MCF 10A (cell line): ENCODE measurements at regions of chr1 and their contacts with region 1.

Region 1: DNA sequence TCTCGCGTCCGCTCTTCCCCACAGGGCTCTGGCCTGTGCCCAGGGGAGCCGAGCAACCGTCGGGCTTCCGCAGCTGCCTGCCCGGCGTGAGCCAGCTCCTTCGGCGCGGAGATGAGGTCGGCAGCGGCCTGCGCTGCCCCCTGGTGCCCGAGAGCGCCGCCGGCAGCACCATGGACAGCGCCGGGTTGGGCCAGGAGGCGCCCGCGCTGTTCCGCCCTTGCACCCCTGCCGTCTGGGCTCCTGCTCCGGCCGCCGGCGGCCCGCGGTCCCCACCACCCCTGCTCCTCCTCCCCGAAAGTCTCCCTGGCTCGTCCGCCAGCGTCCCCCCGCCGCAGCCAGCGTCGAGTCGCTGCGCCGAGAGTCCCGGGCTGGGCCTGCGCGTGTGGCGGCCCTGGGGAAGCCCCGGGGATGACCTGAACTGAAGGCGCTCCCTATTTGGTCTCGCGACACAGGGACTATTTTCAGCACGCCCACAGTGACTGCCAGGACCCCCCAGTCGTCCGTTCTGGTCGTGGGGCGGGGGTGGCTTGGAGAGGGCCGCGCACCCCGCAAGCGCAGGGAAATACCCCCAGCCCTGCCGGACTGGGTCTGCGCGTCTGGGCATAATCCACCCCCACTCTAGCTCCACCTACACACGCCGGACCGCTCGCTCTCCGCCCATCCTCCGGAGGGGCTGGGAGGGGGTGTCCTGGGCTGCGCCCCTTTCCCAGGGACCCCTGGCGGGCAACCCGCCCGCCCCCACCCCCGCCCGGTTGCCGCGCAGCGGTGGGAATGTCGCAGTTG is 1.3 kb downstream of the HES3 start:
- DNase-seq: peak; percentile 75
- H3K4me3 Mint-ChIP-seq: peak overlapping the region; percentile 10
- H3K27ac Mint-ChIP-seq: no peak overlapping the region
- H3K4me1 Mint-ChIP-seq: peaks cover 5% of the 10 kb centered on the region
- H3K27me3 Mint-ChIP-seq: peaks cover 30% of the 10 kb centered on the region
- CTCF ChIP-seq: peak; percentile 91

Region 2: DNA sequence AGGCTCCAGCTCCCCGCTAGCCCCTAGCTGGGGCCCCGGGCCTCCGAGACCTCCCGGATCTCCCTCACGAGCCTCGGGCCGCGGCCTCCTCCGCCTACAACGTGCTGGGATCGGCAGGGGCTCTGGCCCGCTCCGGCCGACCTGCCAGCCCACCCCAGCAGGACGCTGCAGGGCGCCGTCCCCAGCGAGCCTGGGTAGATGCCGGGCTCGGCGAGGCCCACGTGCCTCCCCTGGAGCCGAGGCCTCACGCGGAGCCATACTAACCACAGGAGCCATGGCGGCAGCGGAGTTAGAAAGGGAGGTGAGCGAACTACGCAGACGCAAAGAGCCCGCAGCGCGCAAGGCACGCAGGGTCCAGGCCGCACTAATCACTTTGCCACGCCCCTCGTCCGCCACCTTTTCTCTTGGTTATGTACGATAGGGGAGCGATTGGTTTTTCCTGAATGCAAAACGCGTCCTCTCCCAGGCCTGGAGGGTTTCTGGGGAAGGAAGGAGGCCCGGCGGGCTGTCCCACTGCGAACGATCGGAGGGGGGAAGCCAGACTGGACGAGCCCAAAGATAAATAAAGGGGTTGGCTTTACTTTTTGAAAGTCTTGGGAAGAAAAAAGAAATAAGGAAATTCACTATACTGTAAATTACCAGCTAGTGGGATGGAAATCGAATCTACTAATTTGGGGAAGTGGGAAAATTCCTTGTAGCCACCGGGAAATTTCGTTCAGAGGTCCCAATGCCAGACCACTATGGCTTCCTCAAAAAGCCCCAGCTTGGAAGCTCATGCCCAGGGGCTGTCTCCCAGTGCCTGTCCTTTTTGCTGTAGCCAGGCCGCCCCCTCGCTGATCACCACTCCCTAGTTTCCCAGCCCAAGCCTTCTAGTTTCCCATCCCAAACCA is 45.7 kb before region 1 on chr1 and contains the start of gene RPL22:
- CTCF ChIA-PET with region 1: interaction called, 11 read pairs
- POLR2A ChIA-PET with region 1: no interaction called
- intact Hi-C with region 1: no loop called
- DNase-seq: peak; percentile 100
- H3K4me3 Mint-ChIP-seq: peak within 1 kb of the TSS; percentile 87
- H3K27ac Mint-ChIP-seq: peak within 1 kb of the TSS; percentile 97
- H3K4me1 Mint-ChIP-seq: peaks cover 25% of the 10 kb centered on the region
- H3K27me3 Mint-ChIP-seq: no peaks in the 10 kb centered on the region
- CTCF ChIP-seq: no peak
- total RNA-seq, gene RPL22: 477 and 513 TPM in 2 replicates

Region 3: DNA sequence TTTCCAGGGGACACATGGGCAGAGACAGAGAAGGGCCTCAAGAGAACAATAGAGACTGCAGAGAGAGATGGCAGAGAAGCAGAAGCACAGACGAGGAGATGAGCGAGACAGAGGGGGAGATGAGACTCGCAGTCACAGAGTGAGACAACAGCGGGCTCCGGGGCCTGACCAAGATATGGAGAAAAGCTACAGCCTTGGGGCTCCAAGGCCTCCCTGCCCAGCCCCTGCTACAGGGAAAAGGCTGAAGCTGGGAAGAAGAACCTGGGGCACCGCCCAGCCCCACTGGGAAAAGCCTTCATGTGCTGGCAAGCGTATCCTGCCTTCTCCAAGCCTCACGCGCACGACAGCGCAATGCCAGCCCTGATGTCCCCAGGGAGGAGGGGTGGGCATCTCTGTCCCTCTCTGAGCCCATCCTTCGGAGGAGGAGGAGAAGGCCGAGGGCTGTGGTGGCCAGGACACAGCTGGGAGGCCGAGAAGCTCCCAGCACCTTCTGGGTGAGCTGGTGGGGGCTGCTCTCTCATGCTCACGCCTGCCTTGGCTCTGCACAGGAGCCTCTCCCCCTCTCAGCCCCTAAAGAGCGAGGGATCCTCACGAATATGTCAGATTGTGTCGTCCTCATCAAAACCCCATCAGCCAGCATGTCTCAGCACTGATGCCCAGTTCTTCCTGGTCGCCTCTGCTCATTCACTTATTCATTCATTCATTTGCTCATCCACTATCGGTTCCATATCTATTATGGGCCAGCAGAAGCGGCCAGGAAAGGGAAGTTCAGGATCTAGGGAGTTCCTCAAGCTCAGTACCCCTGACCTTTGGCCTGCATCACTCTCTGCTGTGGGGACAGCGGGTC is 91.7 kb after region 1 on chr1:
- CTCF ChIA-PET with region 1: interaction called, 88 read pairs
- POLR2A ChIA-PET with region 1: interaction called, 3 read pairs
- intact Hi-C with region 1: no loop called
- DNase-seq: no peak
- H3K4me3 Mint-ChIP-seq: no peak overlapping the region
- H3K27ac Mint-ChIP-seq: no peak overlapping the region
- H3K4me1 Mint-ChIP-seq: no peaks in the 10 kb centered on the region
- H3K27me3 Mint-ChIP-seq: no peaks in the 10 kb centered on the region
- CTCF ChIP-seq: no peak

Region 4: DNA sequence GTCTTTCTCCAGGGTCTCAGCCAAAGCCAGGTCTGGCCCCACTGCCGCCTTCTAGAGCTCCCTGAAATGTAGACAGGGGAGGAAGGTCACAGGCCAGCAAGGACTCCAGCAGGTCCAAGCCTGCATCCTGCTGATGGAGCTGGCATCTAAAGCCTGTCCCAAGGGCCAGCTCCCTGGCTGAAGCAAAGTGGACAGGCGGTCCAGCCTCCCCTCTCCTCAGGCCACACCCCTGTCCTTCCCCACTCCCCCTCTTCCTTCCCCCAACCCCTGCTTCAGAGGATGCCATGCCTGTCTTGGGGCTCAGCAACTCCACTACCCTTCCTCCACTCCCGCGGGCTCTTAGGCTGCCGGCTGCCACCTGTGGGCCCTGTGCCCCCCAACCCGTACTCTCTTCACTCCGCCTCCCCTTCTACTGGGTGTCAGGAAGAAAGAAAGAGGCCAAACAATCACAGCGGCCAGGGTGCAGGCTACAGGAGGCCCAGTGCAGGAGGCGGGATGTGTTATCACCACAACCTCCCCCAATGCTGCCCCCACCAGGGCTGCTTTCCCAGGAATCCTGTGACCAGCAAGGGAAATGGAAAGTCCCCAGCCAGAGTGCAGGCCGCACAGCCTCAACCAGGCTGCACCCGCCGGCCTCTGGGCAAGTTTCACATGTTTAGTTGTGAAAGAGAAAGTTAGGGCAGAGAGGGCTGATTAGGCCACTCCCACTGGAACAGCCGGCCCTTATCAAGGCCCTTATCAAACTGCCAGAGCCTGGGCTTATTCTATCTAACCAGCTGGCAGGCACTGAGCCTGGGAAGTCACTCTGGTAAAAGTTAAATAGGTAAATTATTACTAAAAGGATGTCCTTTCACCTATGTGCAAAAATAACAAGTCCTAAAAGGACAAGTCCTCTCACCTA is 114.2 kb after region 1 on chr1:
- CTCF ChIA-PET with region 1: interaction called, 16 read pairs
- POLR2A ChIA-PET with region 1: no interaction called
- intact Hi-C with region 1: no loop called
- DNase-seq: peak; percentile 39
- H3K4me3 Mint-ChIP-seq: no peak overlapping the region
- H3K27ac Mint-ChIP-seq: no peak overlapping the region
- H3K4me1 Mint-ChIP-seq: peaks cover 18% of the 10 kb centered on the region
- H3K27me3 Mint-ChIP-seq: no peaks in the 10 kb centered on the region
- CTCF ChIP-seq: no peak

Region 5: GRCh38 chr1:6414443-6414844 is 169.2 kb after region 1 on chr1:
- CTCF ChIA-PET with region 1: interaction called, 10 read pairs
- POLR2A ChIA-PET with region 1: no interaction called
- intact Hi-C with region 1: no loop called
- DNase-seq: peak; percentile 97
- H3K4me3 Mint-ChIP-seq: peak overlapping the region; percentile 65
- H3K27ac Mint-ChIP-seq: peak overlapping the region; percentile 99
- H3K4me1 Mint-ChIP-seq: peaks cover 32% of the 10 kb centered on the region
- H3K27me3 Mint-ChIP-seq: no peaks in the 10 kb centered on the region
- CTCF ChIP-seq: peak; percentile 54

Region 6: DNA sequence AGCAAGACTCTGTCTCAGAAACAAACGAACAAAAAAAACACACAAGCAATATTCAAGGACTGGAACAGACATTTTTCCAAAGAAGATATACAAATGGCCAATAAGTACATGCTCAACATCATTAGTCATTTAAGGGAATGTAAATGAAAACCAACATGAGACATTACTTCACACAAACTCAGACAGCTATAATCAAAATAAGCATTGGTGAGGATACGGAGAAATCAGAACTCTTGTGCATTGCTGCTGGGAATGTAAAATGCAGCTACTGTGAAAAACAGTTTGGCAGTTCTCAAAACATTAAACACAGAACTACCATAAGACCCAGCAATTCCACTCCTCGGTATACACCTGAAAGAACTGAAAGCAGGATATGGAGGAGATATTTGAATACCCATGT is 293.7 kb after region 1 on chr1:
- CTCF ChIA-PET with region 1: no interaction called
- POLR2A ChIA-PET with region 1: no interaction called
- intact Hi-C with region 1: no loop called
- DNase-seq: no peak
- H3K4me3 Mint-ChIP-seq: no peak overlapping the region
- H3K27ac Mint-ChIP-seq: no peak overlapping the region
- H3K4me1 Mint-ChIP-seq: no peaks in the 10 kb centered on the region
- H3K27me3 Mint-ChIP-seq: no peaks in the 10 kb centered on the region
- CTCF ChIP-seq: no peak